Testis (tissue), 5 donors: ENCODE measurements at regions of chr10 and their contacts with region 1.

Region 1: GRCh38 chr10:88835096-88835909 is 16.3 kb downstream of the ANKRD22 start:
- DNase-seq: peak; percentile 86
- H3K4me3 ChIP-seq: no peak overlapping the region
- H3K27ac ChIP-seq: no peak overlapping the region
- H3K4me1 ChIP-seq: no peaks in the 10 kb centered on the region
- H3K27me3 ChIP-seq: no peaks in the 10 kb centered on the region
- CTCF ChIP-seq: peak; percentile 76 to 89 (median 80)
- POLR2A ChIP-seq: no peak

Region 2: GRCh38 chr10:88490231-88490980 is 344.9 kb before region 1 on chr10:
- intact Hi-C with region 1: no loop called
- DNase-seq: no peak
- H3K4me3 ChIP-seq: no peak overlapping the region
- H3K27ac ChIP-seq: no peak overlapping the region
- H3K4me1 ChIP-seq: no peaks in the 10 kb centered on the region
- H3K27me3 ChIP-seq: no peaks in the 10 kb centered on the region
- CTCF ChIP-seq: no peak
- POLR2A ChIP-seq: no peak

Region 3: GRCh38 chr10:88932539-88933256 is 97.4 kb after region 1 on chr10:
- intact Hi-C with region 1: loop called (anchors 10 kb)
- DNase-seq: peak; percentile 69
- H3K4me3 ChIP-seq: no peak overlapping the region
- H3K27ac ChIP-seq: peak overlapping the region in 1 of 2 donors; percentile 69
- H3K4me1 ChIP-seq: peaks cover 9% of the 10 kb centered on the region
- H3K27me3 ChIP-seq: no peaks in the 10 kb centered on the region
- CTCF ChIP-seq: peak; percentile 78 to 95 (median 93)
- POLR2A ChIP-seq: no peak

Region 4: DNA sequence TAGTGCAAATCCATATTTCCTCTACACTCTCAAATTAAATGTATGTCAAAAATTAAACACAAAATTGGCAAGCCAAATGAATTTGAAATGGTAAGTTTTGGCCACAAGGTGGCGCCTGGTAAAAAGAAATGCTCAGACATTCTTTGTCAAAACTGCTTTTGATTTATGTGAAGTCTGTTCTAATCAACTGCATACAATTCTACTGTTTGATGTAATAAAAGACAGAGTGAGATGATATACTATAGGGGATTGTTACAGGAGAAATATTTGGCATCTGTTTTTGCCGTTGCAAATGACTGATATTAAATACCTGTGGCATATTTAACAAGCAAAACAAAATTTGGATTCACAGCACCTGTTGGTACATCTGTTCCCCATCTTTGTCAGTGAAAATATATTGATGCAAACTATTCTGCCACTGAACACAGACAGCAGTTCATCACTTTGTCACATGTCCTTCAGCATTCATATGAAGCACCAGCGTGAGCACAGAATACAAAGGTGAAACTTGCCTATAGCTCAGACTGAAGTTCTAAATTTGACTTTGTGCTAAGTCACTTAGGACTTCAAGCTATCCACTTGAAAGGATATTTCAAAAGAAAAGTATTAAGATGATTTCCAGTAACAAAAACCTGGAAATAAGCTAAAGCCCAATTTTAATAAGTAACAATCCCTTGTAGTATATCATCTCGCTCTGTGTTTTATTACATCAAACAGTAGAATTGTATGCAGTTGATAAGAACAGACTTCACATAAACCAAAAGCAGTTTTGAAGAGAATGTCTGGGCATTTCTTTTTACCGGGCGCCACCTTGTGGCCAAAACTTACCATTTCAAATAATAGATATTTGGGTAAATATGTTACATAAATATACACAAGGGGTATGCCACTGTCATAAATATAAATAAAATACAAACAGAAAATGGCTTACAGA is 382.0 kb after region 1 on chr10:
- intact Hi-C with region 1: loop called (anchors 10 kb)
- DNase-seq: peak; percentile 75
- H3K4me3 ChIP-seq: no peak overlapping the region
- H3K27ac ChIP-seq: peak overlapping the region in 1 of 2 donors; percentile 38
- H3K4me1 ChIP-seq: peaks cover 4% of the 10 kb centered on the region
- H3K27me3 ChIP-seq: no peaks in the 10 kb centered on the region
- CTCF ChIP-seq: peak; percentile 84 to 94 (median 86)
- POLR2A ChIP-seq: no peak